Activated T-helper 1 cell treated with anti-CD3 and anti-CD28 coated beads, Interleukin-12 subunit alpha, Interleukin-12 subunit beta, Interleukin-2, Interleukin-4 antibody, amounts not matched to agents 30 ng/mL and 10 ng/mL and 1 ng/mL, durations not matched to agents 14 hours and 24 hours and 36 hours (primary cell): ENCODE measurements at regions of chr11 and their contacts with region 1.

Region 1: GRCh38 chr11:34890812-34891211 is 25.4 kb downstream of the APIP start:
- DNase-seq: no peak
- H3K4me3 Mint-ChIP-seq: no peak overlapping the region
- H3K27ac Mint-ChIP-seq: no peak overlapping the region
- H3K4me1 Mint-ChIP-seq: no peaks in the 10 kb centered on the region
- H3K27me3 Mint-ChIP-seq: no peaks in the 10 kb centered on the region

Region 2: GRCh38 chr11:34512840-34513681 is 377.8 kb before region 1 on chr11:
- intact Hi-C with region 1: loop called (anchors 2 kb)
- DNase-seq: peak; percentile 16
- H3K4me3 Mint-ChIP-seq: no peak overlapping the region
- H3K27ac Mint-ChIP-seq: no peak overlapping the region
- H3K4me1 Mint-ChIP-seq: no peaks in the 10 kb centered on the region
- H3K27me3 Mint-ChIP-seq: peaks cover 3% of the 10 kb centered on the region

Region 3: GRCh38 chr11:35192347-35192746 is 301.5 kb after region 1 on chr11:
- intact Hi-C with region 1: no loop called
- DNase-seq: no peak
- H3K4me3 Mint-ChIP-seq: no peak overlapping the region
- H3K27ac Mint-ChIP-seq: no peak overlapping the region
- H3K4me1 Mint-ChIP-seq: peaks cover 69% of the 10 kb centered on the region
- H3K27me3 Mint-ChIP-seq: no peaks in the 10 kb centered on the region